ENCODE measurements at regions of chr2 and their contacts with region 1.

Region 1: DNA sequence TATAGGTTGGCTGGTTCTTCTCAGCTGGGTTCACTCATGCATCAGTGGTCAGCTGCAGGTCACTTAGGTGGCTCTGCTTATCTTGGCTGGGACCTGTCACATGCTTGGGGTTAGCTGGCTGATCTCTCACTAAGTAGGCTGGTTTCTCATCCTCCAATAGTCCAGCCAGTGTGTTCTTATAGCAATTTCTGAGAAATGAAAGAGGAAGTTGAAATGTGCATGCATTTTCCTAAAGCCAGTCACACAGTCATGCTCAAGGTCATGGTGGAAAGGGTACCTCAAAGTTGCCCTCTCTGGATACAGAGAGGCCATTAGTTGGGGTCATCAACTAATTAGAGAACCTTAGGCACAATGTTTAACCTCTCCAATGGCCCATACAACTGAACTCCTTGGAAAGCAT is 64.4 kb downstream of the KLHL29 start:
- DNase-seq: peak in 2 of 3 donors; percentile 40 to 41
- H3K4me3 ChIP-seq: no peak overlapping the region
- H3K27ac ChIP-seq: no peak overlapping the region
- H3K4me1 ChIP-seq: peaks cover 0 to 19% (median 19%) of the 10 kb centered on the region in 4 experiments
- H3K27me3 ChIP-seq: peaks cover 3 to 68% (median 29%) of the 10 kb centered on the region in 5 experiments

Region 2: DNA sequence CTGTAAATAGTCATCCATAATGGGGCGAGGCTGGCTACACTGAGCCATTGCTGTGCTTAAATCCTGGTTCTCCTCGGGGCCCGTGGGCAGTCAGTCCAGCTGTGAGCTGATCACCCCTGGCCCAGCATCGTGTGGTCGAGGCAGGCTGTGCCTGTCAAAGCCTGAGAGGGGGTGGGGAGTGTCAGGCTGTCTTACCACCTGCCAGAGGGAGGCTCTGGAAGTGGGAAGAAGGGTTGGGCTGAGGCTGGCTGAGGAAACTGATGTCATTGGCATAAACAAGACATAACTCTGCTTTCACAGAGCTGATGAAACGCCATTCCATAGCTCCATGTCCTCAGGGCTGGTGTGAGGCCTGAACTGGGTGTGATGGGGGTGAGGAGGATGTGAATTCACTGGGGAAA is 14.7 kb before region 1 on chr2:
- CTCF ChIA-PET with region 1: no interaction called
- POLR2A ChIA-PET with region 1: no interaction called
- DNase-seq: no peak
- H3K4me3 ChIP-seq: no peak overlapping the region
- H3K27ac ChIP-seq: no peak overlapping the region
- H3K4me1 ChIP-seq: peaks cover 0 to 4% (median 2%) of the 10 kb centered on the region in 4 experiments
- H3K27me3 ChIP-seq: peaks cover 4 to 46% (median 12%) of the 10 kb centered on the region in 5 experiments

Region 3: DNA sequence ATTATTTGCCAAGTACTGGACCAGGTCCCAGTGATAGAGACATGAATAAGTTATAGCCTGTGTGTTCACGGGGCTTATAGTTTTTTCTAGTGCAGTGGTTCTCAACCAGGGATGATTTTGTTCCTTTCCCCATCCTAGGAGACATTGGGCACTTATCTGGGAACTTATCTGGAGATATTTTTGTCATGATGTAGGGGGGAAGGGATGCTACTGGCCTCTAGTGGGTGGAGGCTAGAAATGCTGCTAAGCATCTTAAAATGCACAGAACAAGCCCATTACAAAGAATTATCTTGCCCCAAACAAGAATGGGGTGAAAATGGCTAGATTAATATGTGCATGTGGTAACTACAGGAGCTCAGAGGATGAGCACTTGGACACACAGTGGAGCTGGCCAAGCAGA is 10.8 kb after region 1 on chr2:
- CTCF ChIA-PET with region 1: interaction called, 15 read pairs
- POLR2A ChIA-PET with region 1: no interaction called
- DNase-seq: peak in 2 of 3 donors; percentile 10 to 20
- H3K4me3 ChIP-seq: no peak overlapping the region
- H3K27ac ChIP-seq: no peak overlapping the region
- H3K4me1 ChIP-seq: no peaks in the 10 kb centered on the region
- H3K27me3 ChIP-seq: peaks cover 4 to 90% (median 32%) of the 10 kb centered on the region in 5 experiments